ENCODE measurements at regions of chr11 and their contacts with region 1.

Region 1: GRCh38 chr11:2151500-2152257 is 9.3 kb downstream of the INS start:
- DNase-seq: peak; percentile 65 to 88 (median 80)
- H3K4me3 ChIP-seq: peak overlapping the region in 37 of 59 donors; percentile 2 to 43 (median 24)
- H3K27ac ChIP-seq: peak overlapping the region in 1 of 59 donors; percentile 10
- H3K27me3 ChIP-seq: peaks cover 0 to 52% (median 32%) of the 10 kb centered on the region in 45 donors
- CTCF ChIP-seq: peak; percentile 60 to 92 (median 77)

Region 2: GRCh38 chr11:1652771-1653540 is 498.7 kb before region 1 on chr11:
- intact Hi-C with region 1: loop called (anchors 2 kb)
- DNase-seq: peak; percentile 69 to 89 (median 80)
- H3K4me3 ChIP-seq: peak overlapping the region in 14 of 59 donors; percentile 3 to 36 (median 12)
- H3K27ac ChIP-seq: peak overlapping the region in 2 of 59 donors; percentile 46 to 57
- H3K27me3 ChIP-seq: peaks cover 0 to 20% (median 0%) of the 10 kb centered on the region in 45 donors
- CTCF ChIP-seq: peak; percentile 91 to 99 (median 98)

Region 3: DNA sequence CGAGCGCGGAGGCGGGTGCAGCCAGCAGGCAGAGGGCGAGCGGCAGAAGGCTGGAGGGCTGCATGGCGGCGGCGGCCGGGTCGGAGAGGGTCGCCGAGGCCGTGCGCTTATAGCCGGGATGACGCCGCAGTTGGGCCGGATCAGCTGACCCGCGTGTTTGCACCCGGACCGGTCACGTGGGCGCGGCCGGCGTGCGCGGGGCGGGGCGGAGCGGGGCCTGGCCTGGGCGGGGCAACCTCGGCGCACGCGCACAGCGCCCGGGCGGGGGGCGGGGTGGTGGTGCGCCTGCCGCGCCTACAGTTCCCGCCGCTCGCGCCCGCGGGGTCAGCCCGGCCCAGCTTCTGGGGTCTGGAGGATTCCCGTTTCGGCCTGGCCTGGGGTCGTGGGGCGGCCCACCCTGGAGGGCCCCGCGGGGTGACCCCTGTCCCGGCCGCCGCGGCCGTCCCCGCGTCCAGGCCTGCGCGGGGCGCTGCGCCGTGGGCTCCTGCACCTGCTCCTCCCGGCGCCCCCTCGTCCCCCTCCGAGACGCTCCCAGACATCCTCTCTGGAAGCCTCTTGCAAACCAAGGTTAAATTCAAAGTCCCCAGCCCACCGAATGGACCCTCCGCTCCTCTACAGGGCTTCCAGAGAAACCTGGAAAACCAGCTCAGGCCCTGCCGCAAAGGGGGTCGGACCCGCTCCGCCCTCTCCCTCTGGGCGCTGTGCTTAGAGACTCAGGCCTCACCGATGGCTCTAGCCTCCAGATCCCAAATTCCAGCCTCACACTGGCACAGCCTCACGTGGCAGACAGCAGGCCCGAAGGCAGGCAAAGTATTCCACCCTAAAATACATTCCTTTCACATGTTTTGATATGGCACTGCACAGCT is 387.6 kb before region 1 on chr11 and contains the start of gene CTSD:
- intact Hi-C with region 1: loop called in 1 of 2 experiments (anchors 10 kb)
- DNase-seq: peak; percentile 84 to 95 (median 90)
- H3K4me3 ChIP-seq: peak within 1 kb of the TSS; percentile 67 to 100 (median 100)
- H3K27ac ChIP-seq: peak within 1 kb of the TSS; percentile 77 to 99 (median 98)
- H3K27me3 ChIP-seq: no peaks in the 10 kb centered on the region
- CTCF ChIP-seq: peak in 10 of 56 donors; percentile 9 to 38 (median 16)
- total RNA-seq, gene CTSD: 284 to 532 (median 387) TPM

Region 4: DNA sequence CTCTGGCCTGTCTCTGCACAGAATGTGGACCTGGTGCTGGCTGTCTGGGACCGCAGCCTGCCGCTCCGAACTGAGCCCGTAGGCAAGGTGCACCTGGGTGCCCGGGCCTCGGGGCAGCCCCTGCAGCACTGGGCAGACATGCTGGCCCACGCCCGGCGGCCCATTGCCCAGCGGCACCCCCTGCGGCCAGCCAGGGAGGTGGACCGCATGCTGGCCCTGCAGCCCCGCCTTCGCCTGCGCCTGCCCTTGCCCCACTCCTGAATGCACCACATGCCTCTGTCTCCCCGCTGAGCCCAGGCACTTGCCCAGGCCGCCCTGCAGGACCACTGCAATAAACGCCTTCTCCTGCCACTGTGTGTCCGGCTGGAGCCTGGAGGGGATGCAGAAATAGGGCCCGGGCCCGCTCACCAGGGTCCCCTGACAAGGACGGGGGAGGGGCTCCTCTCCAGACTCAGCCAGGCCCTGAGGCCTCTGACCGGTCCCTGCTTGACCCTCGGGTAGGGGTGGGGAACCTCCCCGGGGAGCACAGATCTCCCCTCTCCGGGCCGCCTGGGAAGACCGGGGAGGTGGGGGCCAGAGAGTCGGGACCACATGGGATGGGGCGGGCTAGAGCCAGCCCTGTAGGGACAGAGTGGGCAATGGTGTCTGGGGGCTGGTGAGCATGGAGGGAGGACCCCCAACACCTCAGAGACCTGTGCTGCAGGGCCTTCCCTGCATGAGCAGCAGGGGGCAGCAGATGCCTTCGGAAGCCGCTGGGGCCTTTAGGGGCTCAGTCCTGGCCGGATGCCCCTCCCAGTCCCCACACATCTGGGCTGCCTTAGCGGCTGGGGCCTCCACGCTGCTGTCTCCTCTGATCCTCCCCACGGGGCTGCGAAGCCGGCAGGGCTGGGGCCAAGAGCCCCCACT is 314.3 kb before region 1 on chr11:
- intact Hi-C with region 1: loop called (anchors 5 kb)
- DNase-seq: peak in 5 of 10 donors; percentile 36 to 75 (median 42)
- H3K4me3 ChIP-seq: no peak overlapping the region
- H3K27ac ChIP-seq: no peak overlapping the region
- H3K27me3 ChIP-seq: no peaks in the 10 kb centered on the region
- CTCF ChIP-seq: peak; percentile 30 to 87 (median 77)

Region 5: GRCh38 chr11:1882519-1883238 is 269.0 kb before region 1 on chr11:
- intact Hi-C with region 1: loop called (anchors 5 to 10 kb)
- DNase-seq: peak; percentile 56 to 83 (median 63)
- H3K4me3 ChIP-seq: no peak overlapping the region
- H3K27ac ChIP-seq: no peak overlapping the region
- H3K27me3 ChIP-seq: no peaks in the 10 kb centered on the region
- CTCF ChIP-seq: peak; percentile 56 to 94 (median 84)

Region 6: DNA sequence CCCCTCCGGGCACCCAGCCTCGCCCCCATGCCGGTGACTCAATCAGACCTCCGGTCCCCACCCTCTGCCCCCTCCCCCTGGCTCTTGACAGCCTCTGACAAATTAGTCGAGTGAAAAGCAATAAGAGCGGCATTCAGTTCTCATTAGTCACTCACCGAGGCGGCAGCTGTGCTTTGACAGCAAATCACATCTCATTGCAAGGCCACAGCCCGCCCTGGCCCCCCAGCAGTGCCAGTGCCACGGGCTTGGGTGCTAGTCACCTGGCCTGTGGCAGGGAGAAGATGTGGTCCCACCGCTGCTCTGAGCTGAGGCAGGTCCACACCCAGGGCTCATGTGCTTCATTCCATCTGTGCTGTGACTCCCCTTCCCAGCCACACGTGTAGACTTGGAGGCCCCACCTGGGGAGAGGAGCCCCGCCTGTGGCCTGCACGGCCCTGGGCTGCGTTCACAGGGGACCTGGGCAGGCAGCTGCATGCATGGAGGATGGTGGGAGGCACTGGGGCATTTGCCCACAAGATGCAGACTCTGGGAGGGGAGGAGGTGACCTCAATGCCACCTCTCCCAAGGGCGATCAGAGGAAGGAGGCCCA is 27.3 kb after region 1 on chr11:
- intact Hi-C with region 1: no loop called
- DNase-seq: no peak
- H3K4me3 ChIP-seq: no peak overlapping the region
- H3K27ac ChIP-seq: no peak overlapping the region
- H3K27me3 ChIP-seq: peaks cover 0 to 25% (median 0%) of the 10 kb centered on the region in 45 donors
- CTCF ChIP-seq: no peak